ENCODE measurements at regions of chr14 and their contacts with region 1.

Region 1: GRCh38 chr14:68248481-68249255 is 429.1 kb downstream of the RAD51B start:
- DNase-seq: peak; percentile 34
- ATAC-seq: peak; percentile 77
- H3K4me3 Mint-ChIP-seq: peak overlapping the region; percentile 19
- H3K27ac Mint-ChIP-seq: peak overlapping the region; percentile 90
- H3K4me1 Mint-ChIP-seq: peaks cover 72% of the 10 kb centered on the region
- H3K27me3 Mint-ChIP-seq: no peaks in the 10 kb centered on the region
- CTCF ChIP-seq: no peak

Region 2: DNA sequence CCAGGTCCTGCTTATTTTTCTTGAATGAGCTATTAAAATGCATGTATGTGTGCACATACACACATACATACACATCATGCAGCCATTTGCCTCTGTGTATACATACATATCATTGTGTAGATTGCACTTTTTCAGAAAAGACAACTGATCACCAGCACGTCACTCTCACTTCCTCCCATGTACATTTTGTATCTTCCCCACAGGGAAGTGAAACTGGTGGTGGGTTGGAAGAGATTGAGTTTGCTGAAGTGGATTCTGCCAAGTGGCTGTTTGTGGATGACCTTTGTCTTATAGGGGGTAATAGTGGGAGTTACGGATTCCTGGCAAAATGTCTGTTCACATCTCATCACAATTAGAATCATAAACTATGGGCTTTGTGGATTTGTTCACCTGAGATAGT is 19.5 kb after region 1 on chr14:
- CTCF ChIA-PET with region 1: interaction called, 28 read pairs
- POLR2A ChIA-PET with region 1: interaction called, 107 read pairs
- intact Hi-C with region 1: loop called (anchors 1 kb)
- DNase-seq: no peak
- ATAC-seq: peak; percentile 67
- H3K4me3 Mint-ChIP-seq: peak overlapping the region; percentile 63
- H3K27ac Mint-ChIP-seq: peak overlapping the region; percentile 93
- H3K4me1 Mint-ChIP-seq: peaks cover 93% of the 10 kb centered on the region
- H3K27me3 Mint-ChIP-seq: no peaks in the 10 kb centered on the region
- CTCF ChIP-seq: no peak

Region 3: DNA sequence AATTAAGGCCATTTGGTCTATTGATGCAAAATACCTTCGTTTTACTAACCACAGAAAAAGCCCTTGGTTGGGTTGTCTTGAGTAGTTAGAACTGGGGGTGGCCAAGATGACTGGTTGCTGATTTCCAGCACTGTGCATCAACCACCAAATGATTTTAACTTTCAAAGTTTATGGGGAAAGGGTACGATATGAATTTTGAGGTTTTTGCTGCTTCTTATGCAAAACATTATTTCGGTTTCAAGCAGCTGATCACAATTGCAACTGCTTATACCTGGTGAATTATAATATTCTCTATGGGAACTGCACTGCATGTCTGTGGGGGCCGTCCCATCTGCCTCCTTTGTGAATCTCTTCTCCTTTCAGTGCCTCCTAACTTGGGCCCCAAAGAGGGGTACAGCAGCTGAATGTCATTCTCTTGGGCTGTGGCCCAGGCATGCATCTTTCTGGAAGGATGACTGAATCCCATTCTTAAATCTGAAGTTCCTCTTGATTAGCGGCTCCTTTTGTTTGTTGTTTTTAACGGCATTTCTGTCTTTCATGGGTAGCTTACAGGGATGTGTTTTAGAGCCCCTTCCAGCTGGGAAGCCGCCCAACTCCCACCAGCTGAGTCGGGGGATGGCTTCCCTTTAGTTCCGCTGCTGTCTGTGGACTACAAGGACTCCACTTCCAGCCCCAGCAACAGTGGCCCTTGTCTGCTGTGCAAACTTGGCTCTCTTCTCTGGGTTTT is 64.4 kb after region 1 on chr14:
- CTCF ChIA-PET with region 1: interaction called, 6 read pairs
- POLR2A ChIA-PET with region 1: interaction called, 29 read pairs
- intact Hi-C with region 1: loop called (anchors 1 kb)
- DNase-seq: no peak
- ATAC-seq: peak; percentile 84
- H3K4me3 Mint-ChIP-seq: peak overlapping the region; percentile 62
- H3K27ac Mint-ChIP-seq: peak overlapping the region; percentile 94
- H3K4me1 Mint-ChIP-seq: peaks cover 91% of the 10 kb centered on the region
- H3K27me3 Mint-ChIP-seq: no peaks in the 10 kb centered on the region
- CTCF ChIP-seq: no peak

Region 4: DNA sequence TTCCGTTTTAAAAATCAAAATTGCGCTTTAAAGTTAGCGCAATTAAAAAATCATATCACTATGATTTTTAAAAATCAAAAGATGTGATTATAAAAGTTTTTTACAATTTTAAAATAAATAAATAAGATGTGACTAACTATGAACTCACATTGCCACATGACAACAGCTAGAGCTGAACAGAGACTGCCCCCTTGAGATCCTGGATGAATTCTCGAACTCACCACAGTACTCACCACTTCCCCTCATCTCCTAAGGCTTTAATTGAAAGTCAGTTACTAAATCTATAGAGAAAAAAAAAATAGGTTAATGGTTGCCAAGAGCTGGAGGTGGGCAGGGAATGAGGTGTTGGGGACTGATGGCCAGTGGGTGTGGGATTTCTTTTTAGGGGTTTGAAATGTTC is 160.0 kb after region 1 on chr14:
- CTCF ChIA-PET with region 1: interaction called, 31 read pairs
- POLR2A ChIA-PET with region 1: interaction called, 83 read pairs
- intact Hi-C with region 1: loop called (anchors 1 kb)
- DNase-seq: no peak
- ATAC-seq: peak; percentile 53
- H3K4me3 Mint-ChIP-seq: peak overlapping the region; percentile 16
- H3K27ac Mint-ChIP-seq: peak overlapping the region; percentile 80
- H3K4me1 Mint-ChIP-seq: peaks cover 75% of the 10 kb centered on the region
- H3K27me3 Mint-ChIP-seq: no peaks in the 10 kb centered on the region
- CTCF ChIP-seq: no peak

Region 5: DNA sequence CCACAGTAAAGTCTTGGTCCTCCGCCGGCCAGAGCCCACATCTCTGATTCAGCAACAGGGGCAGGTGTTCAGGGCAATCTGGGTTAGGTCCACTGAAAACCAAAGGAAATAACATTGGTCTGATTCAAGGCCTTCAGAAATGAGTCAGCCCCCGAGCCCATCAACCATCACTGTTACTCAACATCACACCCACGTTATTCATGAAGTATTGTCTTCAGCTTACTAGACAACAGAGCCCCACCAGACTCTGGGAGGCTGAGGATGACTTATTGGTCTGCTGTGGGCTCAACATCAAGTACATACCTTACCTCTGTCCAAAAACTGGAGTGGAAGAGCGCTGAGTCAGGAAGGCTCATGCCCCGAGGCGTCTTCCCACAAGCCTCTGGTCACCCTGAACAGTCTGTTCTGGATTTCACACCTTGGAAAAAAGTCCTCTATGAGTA is 446.7 kb after region 1 on chr14:
- CTCF ChIA-PET with region 1: no interaction called
- POLR2A ChIA-PET with region 1: interaction called, 3 read pairs
- intact Hi-C with region 1: loop called (anchors 2 kb)
- DNase-seq: no peak
- ATAC-seq: peak; percentile 81
- H3K4me3 Mint-ChIP-seq: peak overlapping the region; percentile 42
- H3K27ac Mint-ChIP-seq: peak overlapping the region; percentile 43
- H3K4me1 Mint-ChIP-seq: peaks cover 46% of the 10 kb centered on the region
- H3K27me3 Mint-ChIP-seq: no peaks in the 10 kb centered on the region
- CTCF ChIP-seq: no peak

Region 6: GRCh38 chr14:68843471-68844209 is 595.0 kb after region 1 on chr14:
- CTCF ChIA-PET with region 1: interaction called, 26 read pairs
- POLR2A ChIA-PET with region 1: interaction called, 6 read pairs
- intact Hi-C with region 1: loop called (anchors 1 kb)
- DNase-seq: peak; percentile 66
- ATAC-seq: peak; percentile 93
- H3K4me3 Mint-ChIP-seq: peak overlapping the region; percentile 65
- H3K27ac Mint-ChIP-seq: peak overlapping the region; percentile 4
- H3K4me1 Mint-ChIP-seq: peaks cover 15% of the 10 kb centered on the region
- H3K27me3 Mint-ChIP-seq: peaks cover 4% of the 10 kb centered on the region
- CTCF ChIP-seq: peak; percentile 93

Measured in activated B cell treated with CpG ODN at 0.5 μM for 24 hours (primary cell).